ENCODE measurements at regions of chr4 and their contacts with region 1.

Region 1: DNA sequence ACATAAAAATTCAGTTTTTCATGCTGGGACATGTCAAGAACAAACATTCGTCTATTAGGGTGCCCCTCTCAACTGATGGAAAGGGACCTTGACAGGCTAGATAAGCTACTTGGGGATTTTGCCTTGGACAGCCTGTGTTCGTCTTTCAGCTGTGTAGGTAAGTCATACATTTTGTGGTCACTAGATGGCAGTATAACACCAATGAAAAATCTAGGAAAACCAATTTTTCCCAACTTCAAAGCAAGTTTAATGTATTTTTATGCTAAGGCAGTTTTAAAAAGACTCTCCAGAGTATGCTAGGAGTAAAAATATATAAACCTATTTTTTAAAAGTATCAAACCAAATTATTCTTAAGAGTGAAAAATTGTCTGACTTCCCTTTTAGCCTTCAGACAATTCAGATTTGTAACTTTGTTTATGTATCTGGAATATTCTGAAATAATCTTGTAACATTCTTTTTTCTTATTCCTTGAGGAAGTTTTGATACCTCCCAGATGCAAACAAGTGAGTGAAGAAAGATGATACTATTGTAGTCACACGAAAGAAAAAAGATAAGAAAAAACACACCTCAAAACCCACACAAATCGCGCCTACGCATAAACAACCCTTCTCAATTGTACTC is 158.3 kb downstream of the CPE start:
- DNase-seq: no peak
- ATAC-seq: peak; percentile 56

Region 2: DNA sequence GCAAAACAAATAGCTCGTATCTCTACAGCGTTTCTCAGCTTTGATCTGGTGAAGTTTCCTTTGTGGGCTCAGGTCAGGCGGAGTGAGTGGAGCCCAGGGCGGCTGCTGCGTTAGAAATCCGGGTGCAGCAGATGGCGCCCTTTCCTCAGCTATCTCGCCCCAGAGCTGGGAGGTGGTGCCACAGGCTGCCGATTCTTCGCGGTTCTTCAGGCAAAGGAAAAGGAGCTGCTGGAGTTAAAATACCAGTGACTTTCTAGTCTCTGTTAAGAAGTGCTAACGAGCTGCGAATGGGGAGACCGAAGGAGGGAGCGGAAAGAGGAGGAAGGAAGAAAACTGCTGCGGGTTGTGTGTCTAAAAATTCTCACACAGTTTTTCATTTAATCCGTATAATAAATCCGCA is 43.8 kb before region 1 on chr4:
- intact Hi-C with region 1: loop called (anchors 5 kb)
- DNase-seq: peak; percentile 78
- ATAC-seq: peak; percentile 85

Region 3: DNA sequence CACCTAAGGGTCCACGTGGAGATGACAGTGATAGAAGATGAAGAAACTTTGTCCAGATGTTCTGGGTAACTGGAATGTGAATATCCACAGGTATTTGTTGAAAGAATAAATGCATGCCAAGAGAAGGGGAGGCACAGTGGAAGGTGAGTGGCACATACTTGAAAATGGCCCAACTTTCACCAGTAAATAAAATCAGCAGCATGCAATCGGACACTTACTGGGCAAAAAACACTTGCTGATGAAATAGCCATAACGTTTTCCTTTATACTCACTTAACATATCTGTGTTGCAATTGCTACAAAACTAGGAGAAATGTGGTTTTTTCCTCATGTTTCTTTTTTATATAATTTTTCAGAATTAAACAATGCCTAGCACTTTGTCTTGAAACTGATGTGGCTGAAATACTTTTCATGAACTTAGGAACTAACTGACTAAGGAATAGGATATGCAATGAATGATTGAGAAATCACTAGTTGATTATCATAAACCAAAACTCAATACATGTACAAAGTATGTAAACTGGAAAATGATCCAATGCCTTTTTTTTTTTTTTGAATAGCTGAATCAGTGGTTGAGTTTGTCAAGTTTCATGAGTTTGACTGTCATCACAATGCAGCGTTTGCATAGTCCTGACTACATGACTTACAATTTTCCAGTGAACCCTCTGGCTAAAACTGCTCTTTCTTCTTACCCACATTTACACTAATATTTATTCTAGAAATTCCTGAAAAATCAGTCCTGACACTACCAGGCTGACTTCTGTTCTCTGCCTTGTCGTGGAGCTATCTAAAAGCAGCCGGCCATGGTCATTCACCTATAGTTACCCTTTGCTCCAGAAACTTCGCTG is 30.9 kb before region 1 on chr4:
- intact Hi-C with region 1: no loop called
- DNase-seq: no peak
- ATAC-seq: no peak

Region 4: DNA sequence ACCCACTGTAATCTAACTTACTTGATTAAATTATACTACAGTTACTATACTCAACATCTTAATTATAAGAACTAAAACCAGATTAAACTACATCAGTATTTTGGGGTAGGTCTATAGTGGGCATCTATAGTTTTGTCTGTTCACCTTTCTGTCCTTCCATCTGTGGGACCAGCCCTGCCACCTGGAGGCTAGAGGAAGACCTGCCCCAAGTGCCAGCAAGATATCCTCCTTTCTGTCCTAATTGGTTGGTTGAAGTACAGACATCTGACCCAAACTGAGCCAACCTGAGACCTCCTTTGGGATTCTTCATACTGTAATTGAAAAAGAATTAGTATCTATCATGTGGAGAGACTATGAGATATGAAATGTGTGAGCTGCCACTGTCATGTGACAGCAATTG is 163.7 kb after region 1 on chr4:
- intact Hi-C with region 1: loop called (anchors 5 kb)
- DNase-seq: no peak
- ATAC-seq: no peak

Region 5: DNA sequence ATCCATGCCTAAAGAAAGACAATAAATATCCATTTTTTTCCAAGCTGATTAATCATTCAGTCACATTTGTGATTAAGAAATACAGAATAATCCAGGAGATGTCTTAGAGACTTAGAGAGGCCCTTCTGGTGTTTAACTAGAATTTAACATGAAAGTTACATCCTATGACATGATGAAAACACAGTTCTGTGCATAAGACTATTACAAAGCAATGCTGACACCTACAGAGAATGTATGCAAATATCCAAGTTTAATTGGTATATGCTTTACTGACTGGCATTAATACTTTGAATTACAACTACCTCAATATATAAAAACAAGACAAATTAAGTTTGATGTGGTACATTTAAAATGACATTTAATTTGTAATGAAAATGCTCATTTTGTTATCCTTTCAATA is 318.1 kb after region 1 on chr4:
- intact Hi-C with region 1: loop called (anchors 10 kb)
- DNase-seq: no peak
- ATAC-seq: no peak

Region 6: DNA sequence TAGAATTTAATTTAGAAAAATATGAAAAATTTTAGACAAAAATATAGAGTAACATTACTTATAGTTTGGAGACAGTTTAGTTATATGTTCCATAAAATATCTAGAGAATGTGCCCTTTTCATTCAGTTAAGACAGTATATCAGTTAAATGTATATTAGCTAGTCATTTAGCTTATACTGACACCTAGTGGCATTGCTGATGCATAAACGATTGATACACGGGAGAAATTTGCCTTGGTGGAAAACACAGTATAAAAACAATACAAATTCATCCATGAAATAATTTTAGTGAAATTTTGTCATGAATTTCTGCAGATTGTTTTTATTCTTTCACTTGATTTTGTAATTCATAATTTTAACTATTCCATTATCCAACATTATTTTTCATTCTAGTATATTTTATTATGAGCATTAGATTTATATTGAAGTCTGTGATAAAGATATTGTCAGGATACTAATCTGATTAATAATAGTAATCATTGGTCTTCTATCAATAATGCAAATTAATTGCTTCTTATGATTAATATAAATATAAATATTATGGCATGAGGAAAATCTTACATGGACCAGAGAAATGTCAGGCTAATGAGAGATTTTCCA is 554.9 kb after region 1 on chr4:
- intact Hi-C with region 1: loop called (anchors 1 kb)
- DNase-seq: no peak
- ATAC-seq: no peak